Caco-2 (cell line): ENCODE measurements at regions of chr1 and their contacts with region 1.

Region 1: DNA sequence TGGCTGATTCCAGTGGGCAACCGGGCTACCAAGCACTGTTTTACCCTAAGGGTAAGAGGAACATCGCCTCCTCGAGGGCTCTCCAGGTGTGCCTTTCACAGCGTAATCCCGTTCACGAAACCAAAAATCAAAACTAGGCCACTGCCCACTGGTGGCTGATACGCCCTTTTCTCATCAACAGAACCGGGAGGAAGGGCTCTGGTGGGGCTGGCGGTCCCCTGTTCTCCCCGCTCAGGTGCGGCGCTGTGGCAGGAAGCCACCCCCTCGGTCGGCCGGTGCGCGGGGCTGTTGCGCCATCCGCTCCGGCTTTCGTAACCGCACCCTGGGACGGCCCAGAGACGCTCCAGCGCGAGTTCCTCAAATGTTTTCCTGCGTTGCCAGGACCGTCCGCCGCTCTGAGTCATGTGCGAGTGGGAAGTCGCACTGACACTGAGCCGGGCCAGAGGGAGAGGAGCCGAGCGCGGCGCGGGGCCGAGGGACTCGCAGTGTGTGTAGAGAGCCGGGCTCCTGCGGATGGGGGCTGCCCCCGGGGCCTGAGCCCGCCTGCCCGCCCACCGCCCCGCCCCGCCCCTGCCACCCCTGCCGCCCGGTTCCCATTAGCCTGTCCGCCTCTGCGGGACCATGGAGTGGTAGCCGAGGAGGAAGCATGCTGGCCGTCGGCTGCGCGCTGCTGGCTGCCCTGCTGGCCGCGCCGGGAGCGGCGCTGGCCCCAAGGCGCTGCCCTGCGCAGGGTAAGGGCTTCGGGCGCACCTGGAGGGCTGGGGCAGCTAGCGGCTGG is at the start of gene IL6R:
- DNase-seq: peak; percentile 81 to 87
- H3K4me3 ChIP-seq: peak within 1 kb of the TSS; percentile 61
- H3K4me3 Mint-ChIP-seq: peak within 1 kb of the TSS; percentile 85
- H3K27ac Mint-ChIP-seq: peak within 1 kb of the TSS; percentile 79
- H3K4me1 ChIP-seq: peaks cover 14% of the 10 kb centered on the region
- H3K4me1 Mint-ChIP-seq: no peaks in the 10 kb centered on the region
- H3K27me3 ChIP-seq: no peaks in the 10 kb centered on the region
- H3K27me3 Mint-ChIP-seq: no peaks in the 10 kb centered on the region
- CTCF ChIP-seq: peak in 1 of 2 experiments; percentile 68
- total RNA-seq, gene IL6R: 4.9 and 5.8 TPM in 2 replicates

Region 2: DNA sequence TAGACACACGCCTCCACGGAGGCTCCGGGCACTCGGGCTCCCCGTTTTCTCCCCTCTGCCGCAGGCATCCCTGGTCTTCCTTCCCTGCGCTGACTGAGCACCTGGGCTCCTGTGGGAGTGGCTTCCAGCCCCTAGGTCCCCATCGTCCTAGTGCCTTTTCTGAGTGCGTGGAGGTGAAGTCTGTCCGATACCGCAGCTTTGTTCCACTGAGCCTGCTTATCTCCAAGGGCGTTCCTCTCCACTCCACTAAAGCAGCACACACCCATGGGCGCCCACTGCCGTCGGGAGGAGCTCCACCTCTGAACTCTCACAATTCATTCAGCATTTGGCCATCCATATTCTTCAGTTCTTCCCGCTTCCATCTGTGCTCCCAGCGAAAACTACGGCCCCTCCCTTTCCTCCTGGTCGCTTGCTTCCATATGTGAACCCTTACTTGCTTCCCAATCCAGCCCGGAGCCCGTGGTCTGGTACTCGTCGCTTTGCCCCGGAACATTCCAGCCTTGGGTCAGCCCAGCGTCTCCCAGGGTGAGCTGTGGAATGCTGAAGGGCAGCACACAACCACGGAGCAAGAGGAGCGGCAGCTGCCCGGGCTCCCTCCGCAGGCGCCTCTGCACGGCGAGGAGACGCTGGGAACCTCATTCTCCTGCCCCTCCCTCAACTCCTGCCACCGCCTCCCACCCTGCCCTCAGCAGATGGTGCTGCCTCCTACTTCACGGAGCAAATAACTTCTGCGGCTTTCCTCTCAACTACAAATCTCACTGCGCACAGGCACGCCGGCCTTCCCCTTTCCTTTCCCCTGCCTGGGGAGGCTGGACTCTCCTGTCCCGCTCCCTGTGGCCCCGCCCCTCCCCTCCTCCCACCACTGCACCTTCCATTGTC is 52.4 kb before region 1 on chr1:
- CTCF ChIA-PET with region 1: interaction called, 9 read pairs
- POLR2A ChIA-PET with region 1: no interaction called
- intact Hi-C with region 1: loop called (anchors 1 kb)
- DNase-seq: peak; percentile 73 to 81
- H3K4me3 ChIP-seq: peak overlapping the region; percentile 43
- H3K4me3 Mint-ChIP-seq: peak overlapping the region; percentile 86
- H3K27ac Mint-ChIP-seq: peak overlapping the region; percentile 86
- H3K4me1 ChIP-seq: peaks cover 25% of the 10 kb centered on the region
- H3K4me1 Mint-ChIP-seq: peaks cover 20% of the 10 kb centered on the region
- H3K27me3 ChIP-seq: no peaks in the 10 kb centered on the region
- H3K27me3 Mint-ChIP-seq: no peaks in the 10 kb centered on the region
- CTCF ChIP-seq: no peak

Region 3: DNA sequence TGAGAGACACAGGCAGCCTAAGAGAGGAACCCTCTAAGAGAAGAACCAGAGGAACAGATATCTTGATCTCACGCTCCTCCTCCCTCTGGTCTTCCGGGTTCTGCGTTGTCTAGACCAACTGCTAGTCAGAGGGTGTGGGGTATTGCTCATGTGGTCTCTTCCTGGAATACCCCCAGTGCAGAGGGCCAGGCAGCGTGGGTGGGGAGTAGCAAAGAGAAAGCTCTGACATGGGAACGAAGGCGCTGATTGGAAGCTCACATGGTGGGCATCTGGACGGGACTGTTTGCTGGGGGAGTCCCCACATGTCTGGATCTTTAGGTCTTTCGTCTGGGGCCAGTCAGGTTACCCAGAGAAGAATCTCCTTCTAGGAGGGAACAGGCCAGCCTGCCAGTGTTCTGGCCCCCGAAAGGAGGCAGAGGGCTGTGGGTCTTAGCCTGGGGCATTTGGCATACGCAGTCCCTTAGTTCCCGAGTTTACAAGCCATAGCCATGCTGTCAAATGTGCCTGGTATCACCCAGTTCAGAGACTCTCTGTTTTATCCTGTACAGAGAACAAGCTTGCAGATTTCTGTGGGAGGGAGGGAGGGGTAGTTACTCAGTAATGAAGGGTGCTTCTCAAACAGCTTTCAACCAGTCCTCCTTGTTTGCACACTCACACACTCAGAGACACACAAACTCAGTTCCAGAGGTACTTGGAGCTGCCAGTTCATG is 18.4 kb before region 1 on chr1:
- CTCF ChIA-PET with region 1: no interaction called
- POLR2A ChIA-PET with region 1: no interaction called
- intact Hi-C with region 1: loop called (anchors 1 kb)
- DNase-seq: no peak
- H3K4me3 ChIP-seq: no peak overlapping the region
- H3K4me3 Mint-ChIP-seq: peak overlapping the region; percentile 20
- H3K27ac Mint-ChIP-seq: peak overlapping the region; percentile 14
- H3K4me1 ChIP-seq: peaks cover 12% of the 10 kb centered on the region
- H3K4me1 Mint-ChIP-seq: peaks cover 15% of the 10 kb centered on the region
- H3K27me3 ChIP-seq: no peaks in the 10 kb centered on the region
- H3K27me3 Mint-ChIP-seq: no peaks in the 10 kb centered on the region
- CTCF ChIP-seq: no peak

Region 4: GRCh38 chr1:154419620-154420571 is 14.7 kb after region 1 on chr1:
- CTCF ChIA-PET with region 1: interaction called, 5 read pairs
- POLR2A ChIA-PET with region 1: no interaction called
- intact Hi-C with region 1: loop called (anchors 1 kb)
- DNase-seq: no peak
- H3K4me3 ChIP-seq: no peak overlapping the region
- H3K4me3 Mint-ChIP-seq: no peak overlapping the region
- H3K27ac Mint-ChIP-seq: peak overlapping the region; percentile 66
- H3K4me1 ChIP-seq: peaks cover 19% of the 10 kb centered on the region
- H3K4me1 Mint-ChIP-seq: peaks cover 9% of the 10 kb centered on the region
- H3K27me3 ChIP-seq: no peaks in the 10 kb centered on the region
- H3K27me3 Mint-ChIP-seq: no peaks in the 10 kb centered on the region
- CTCF ChIP-seq: no peak

Region 5: GRCh38 chr1:154442006-154442740 is 37.0 kb after region 1 on chr1:
- CTCF ChIA-PET with region 1: interaction called, 7 read pairs
- POLR2A ChIA-PET with region 1: no interaction called
- intact Hi-C with region 1: loop called (anchors 5 kb)
- DNase-seq: peak in 1 of 2 experiments; percentile 15
- H3K4me3 ChIP-seq: no peak overlapping the region
- H3K4me3 Mint-ChIP-seq: no peak overlapping the region
- H3K27ac Mint-ChIP-seq: no peak overlapping the region
- H3K4me1 ChIP-seq: peaks cover 5% of the 10 kb centered on the region
- H3K4me1 Mint-ChIP-seq: peaks cover 7% of the 10 kb centered on the region
- H3K27me3 ChIP-seq: no peaks in the 10 kb centered on the region
- H3K27me3 Mint-ChIP-seq: no peaks in the 10 kb centered on the region
- CTCF ChIP-seq: peak; percentile 33 to 39

Region 6: DNA sequence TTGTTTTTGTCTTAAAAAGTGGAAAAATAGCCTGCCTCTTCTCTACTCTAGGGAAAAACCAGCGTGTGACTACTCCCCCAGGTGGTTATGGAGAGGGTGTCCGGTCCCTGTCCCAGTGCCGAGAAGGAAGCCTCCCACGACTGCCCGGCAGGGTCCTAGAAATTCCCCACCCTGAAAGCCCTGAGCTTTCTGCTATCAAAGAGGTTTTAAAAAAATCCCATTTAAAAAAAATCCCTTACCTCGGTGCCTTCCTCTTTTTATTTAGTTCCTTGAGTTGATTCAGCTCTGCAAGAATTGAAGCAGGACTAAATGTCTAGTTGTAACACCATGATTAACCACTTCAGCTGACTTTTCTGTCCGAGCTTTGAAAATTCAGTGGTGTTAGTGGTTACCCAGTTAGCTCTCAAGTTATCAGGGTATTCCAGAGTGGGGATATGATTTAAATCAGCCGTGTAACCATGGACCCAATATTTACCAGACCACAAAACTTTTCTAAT is 61.8 kb after region 1 on chr1:
- CTCF ChIA-PET with region 1: no interaction called
- POLR2A ChIA-PET with region 1: no interaction called
- intact Hi-C with region 1: loop called (anchors 2 kb)
- DNase-seq: peak in 1 of 2 experiments; percentile 17
- H3K4me3 ChIP-seq: no peak overlapping the region
- H3K4me3 Mint-ChIP-seq: no peak overlapping the region
- H3K27ac Mint-ChIP-seq: no peak overlapping the region
- H3K4me1 ChIP-seq: no peaks in the 10 kb centered on the region
- H3K4me1 Mint-ChIP-seq: peaks cover 7% of the 10 kb centered on the region
- H3K27me3 ChIP-seq: no peaks in the 10 kb centered on the region
- H3K27me3 Mint-ChIP-seq: no peaks in the 10 kb centered on the region
- CTCF ChIP-seq: peak in 1 of 2 experiments; percentile 39